CD4-positive, alpha-beta T cell (primary cell): ENCODE measurements at regions of chr15 and their contacts with region 1.

Region 1: DNA sequence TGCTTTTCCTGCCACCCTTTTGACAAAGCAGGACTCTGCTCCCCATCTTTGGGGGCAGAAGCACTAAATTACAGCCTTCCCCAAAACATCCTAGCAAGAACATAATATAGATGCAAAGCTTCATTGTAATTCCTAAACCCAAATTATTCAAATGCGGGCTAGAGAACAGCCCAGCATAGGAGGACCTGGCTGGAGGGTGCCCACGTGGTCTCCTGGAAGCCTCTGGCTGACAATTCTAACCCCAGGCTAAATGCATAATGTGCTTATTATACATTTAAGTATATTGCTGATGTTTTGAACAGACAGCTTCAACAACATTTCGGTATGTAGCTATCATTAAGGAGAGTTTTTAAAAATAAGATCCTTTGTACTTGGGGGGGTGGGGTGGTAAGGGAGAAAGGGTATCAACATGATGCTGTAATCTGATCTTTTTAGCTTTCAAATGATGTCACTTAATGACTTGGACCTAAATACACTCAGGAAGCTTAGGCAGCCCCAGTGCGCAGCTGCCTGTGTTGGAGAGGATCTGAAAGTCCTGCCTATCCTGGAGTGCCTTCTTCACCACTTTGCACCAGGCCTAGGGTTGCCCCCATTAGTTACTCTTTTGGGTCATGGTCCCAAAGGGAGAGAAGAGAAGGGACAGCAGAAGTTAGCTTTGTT is 57.2 kb upstream of the USP3 start:
- DNase-seq: no peak
- ATAC-seq: no peak
- H3K4me3 ChIP-seq: no peak overlapping the region
- H3K4me3 Mint-ChIP-seq: no peak overlapping the region
- H3K27ac ChIP-seq: no peak overlapping the region
- H3K27ac Mint-ChIP-seq: peak overlapping the region; percentile 79
- H3K4me1 ChIP-seq: peaks cover 21% of the 10 kb centered on the region
- H3K4me1 Mint-ChIP-seq: peaks cover 12% of the 10 kb centered on the region
- H3K27me3 ChIP-seq: no peaks in the 10 kb centered on the region
- H3K27me3 Mint-ChIP-seq: no peaks in the 10 kb centered on the region
- CTCF ChIP-seq: no peak

Region 2: DNA sequence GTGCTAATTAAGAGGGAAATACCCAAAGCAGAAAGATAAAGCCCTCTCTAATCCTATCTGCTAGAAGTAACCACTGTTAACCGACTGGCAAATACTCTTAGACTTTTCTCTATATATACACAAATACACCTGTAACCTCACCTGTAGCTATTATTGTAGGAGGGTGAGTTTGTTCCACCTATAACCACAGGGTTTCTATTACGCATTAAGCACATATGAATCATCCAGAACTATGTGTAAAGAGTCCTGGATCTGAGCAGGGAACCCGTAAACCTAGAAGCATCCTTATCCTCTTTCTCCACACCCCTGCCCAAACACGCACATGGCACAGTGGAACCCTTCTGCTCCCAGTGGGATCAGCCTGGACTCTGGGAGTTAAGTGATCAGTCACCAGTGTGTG is 1109.2 kb before region 1 on chr15:
- CTCF ChIA-PET with region 1: no interaction called
- POLR2A ChIA-PET with region 1: no interaction called
- intact Hi-C with region 1: no loop called
- DNase-seq: no peak
- ATAC-seq: no peak
- H3K4me3 ChIP-seq: no peak overlapping the region
- H3K4me3 Mint-ChIP-seq: no peak overlapping the region
- H3K27ac ChIP-seq: no peak overlapping the region
- H3K27ac Mint-ChIP-seq: no peak overlapping the region
- H3K4me1 ChIP-seq: no peaks in the 10 kb centered on the region
- H3K4me1 Mint-ChIP-seq: no peaks in the 10 kb centered on the region
- H3K27me3 ChIP-seq: no peaks in the 10 kb centered on the region
- H3K27me3 Mint-ChIP-seq: no peaks in the 10 kb centered on the region
- CTCF ChIP-seq: no peak

Region 3: DNA sequence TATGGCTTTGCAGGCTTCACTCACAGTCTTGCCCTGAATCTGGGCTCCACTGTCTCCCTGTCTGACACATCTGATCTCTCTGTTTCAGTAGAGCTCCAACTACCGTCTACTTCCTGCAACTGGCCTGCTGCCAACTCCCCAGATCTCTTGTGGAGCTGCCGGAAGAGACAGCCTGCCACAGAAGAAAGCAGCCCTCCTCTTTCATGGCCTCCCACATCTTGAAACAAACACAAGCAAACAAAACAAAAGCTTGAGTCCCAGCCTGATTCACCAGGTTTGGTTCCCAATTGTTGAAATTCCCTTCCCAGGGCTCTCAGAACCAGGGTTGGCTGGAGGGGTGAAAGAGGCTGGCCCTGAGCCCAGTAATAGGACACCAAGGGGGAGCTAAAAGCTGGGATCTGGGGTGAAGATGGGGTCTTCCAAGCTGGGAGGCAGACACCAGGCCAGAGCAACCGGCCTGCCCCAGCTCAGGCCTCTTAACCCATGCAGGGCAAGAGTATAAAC is 10.2 kb before region 1 on chr15:
- CTCF ChIA-PET with region 1: interaction called, 4 read pairs
- POLR2A ChIA-PET with region 1: interaction called, 11 read pairs
- intact Hi-C with region 1: no loop called
- DNase-seq: peak; percentile 69 to 90 (median 80)
- ATAC-seq: peak; percentile 91
- H3K4me3 ChIP-seq: no peak overlapping the region
- H3K4me3 Mint-ChIP-seq: peak overlapping the region; percentile 1
- H3K27ac ChIP-seq: peak overlapping the region; percentile 38 to 52
- H3K27ac Mint-ChIP-seq: peak overlapping the region; percentile 83
- H3K4me1 ChIP-seq: peaks cover 44% of the 10 kb centered on the region
- H3K4me1 Mint-ChIP-seq: peaks cover 54% of the 10 kb centered on the region
- H3K27me3 ChIP-seq: no peaks in the 10 kb centered on the region
- H3K27me3 Mint-ChIP-seq: no peaks in the 10 kb centered on the region
- CTCF ChIP-seq: no peak

Region 4: GRCh38 chr15:63481105-63481810 is 34.1 kb after region 1 on chr15:
- CTCF ChIA-PET with region 1: no interaction called
- POLR2A ChIA-PET with region 1: no interaction called
- intact Hi-C with region 1: loop called in 1 of 2 experiments (anchors 2 kb)
- DNase-seq: peak in 2 of 14 experiments; percentile 61 to 69
- ATAC-seq: no peak
- H3K4me3 ChIP-seq: no peak overlapping the region
- H3K4me3 Mint-ChIP-seq: peak overlapping the region; percentile 26
- H3K27ac ChIP-seq: peak overlapping the region; percentile 71 to 91
- H3K27ac Mint-ChIP-seq: peak overlapping the region; percentile 95
- H3K4me1 ChIP-seq: peaks cover 89% of the 10 kb centered on the region
- H3K4me1 Mint-ChIP-seq: peaks cover 81% of the 10 kb centered on the region
- H3K27me3 ChIP-seq: no peaks in the 10 kb centered on the region
- H3K27me3 Mint-ChIP-seq: no peaks in the 10 kb centered on the region
- CTCF ChIP-seq: no peak